ENCODE measurements at regions of chr9 and their contacts with region 1.

Region 1: GRCh38 chr9:94039786-94040185 is 44.5 kb upstream of the PTPDC1 start:
- DNase-seq: no peak
- ATAC-seq: no peak
- H3K4me3 Mint-ChIP-seq: no peak overlapping the region
- H3K27ac Mint-ChIP-seq: no peak overlapping the region
- H3K4me1 Mint-ChIP-seq: no peaks in the 10 kb centered on the region
- H3K27me3 Mint-ChIP-seq: no peaks in the 10 kb centered on the region
- CTCF ChIP-seq: no peak

Region 2: DNA sequence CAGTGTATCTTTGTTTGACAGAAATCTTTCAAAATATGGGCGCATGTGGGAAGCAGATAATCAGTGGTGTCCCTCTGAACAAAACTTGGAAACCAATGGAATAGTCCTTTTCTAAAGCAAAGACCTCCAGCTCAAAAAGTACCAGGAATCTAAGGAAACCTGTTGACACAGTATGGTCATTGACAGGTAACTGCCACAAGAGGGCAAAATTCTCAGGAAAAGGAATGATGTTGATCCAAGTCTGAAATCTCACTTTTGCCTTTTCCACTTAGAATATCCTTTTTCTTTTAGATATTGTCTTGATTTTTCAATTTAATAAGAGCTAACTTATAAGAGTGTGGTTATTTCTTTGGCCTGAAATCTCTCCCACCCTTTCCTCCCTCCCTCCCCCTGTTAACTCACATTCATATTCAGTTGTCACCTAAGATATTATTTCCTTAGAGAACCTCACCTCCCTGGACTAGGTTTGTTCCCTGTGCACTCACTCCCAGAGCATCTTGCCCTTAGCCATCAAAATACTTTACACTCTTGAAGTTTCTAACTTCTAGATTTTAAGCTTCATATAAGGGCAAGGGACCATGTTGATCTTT is 25.6 kb before region 1 on chr9:
- CTCF ChIA-PET with region 1: interaction called, 12 read pairs
- POLR2A ChIA-PET with region 1: no interaction called
- intact Hi-C with region 1: no loop called
- DNase-seq: no peak
- ATAC-seq: no peak
- H3K4me3 Mint-ChIP-seq: no peak overlapping the region
- H3K27ac Mint-ChIP-seq: no peak overlapping the region
- H3K4me1 Mint-ChIP-seq: peaks cover 12% of the 10 kb centered on the region
- H3K27me3 Mint-ChIP-seq: no peaks in the 10 kb centered on the region
- CTCF ChIP-seq: peak; percentile 64